Activated CD4-positive, alpha-beta memory T cell treated with anti-CD3 and anti-CD28 coated beads, Interleukin-2, amount 10 ng/mL, durations not matched to agents 7 days and 5 days (primary cell): ENCODE measurements at regions of chr21 and their contacts with region 1.

Region 1: DNA sequence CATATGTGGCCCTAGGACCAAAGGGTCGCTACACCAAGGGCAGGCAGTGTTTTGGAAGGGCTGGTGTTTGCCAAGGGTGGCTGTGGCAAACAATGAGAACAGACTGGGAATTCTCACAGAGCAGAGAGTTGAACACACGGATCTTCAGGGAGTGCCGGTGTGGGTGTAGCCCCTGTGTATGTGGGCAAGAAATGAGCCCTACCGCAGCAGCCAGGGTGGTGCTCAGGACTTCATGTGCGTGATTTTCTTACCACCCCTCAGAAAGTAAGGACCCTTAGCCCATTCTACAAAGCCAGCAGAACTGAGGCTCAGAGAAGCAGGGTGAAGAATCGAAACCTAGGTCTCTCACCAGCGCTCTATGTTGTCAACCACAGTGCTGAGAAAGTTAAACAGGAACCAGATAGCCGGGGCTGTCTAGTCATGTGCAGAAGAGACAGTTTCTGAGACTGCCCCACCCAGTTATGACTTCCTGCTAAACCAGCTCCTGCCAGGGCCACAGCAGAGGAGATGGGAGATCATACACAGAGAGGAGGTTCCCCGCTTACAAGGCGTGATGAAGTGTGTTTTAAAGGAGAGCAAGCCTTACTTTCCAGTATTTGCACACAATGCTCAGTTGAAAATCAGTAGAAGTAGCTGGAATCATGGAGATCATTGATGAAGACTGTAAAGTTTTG is 21.9 kb upstream of the MORC3 start:
- DNase-seq: peak; percentile 83
- H3K4me3 Mint-ChIP-seq: peak overlapping the region; percentile 76
- H3K27ac Mint-ChIP-seq: peak overlapping the region; percentile 93
- H3K4me1 Mint-ChIP-seq: peaks cover 50% of the 10 kb centered on the region
- H3K27me3 Mint-ChIP-seq: no peaks in the 10 kb centered on the region

Region 2: GRCh38 chr21:36260030-36260787 is 37.8 kb before region 1 on chr21:
- CTCF ChIA-PET with region 1: interaction called, 19 read pairs
- POLR2A ChIA-PET with region 1: interaction called, 3 read pairs
- DNase-seq: peak; percentile 46
- H3K4me3 Mint-ChIP-seq: peak overlapping the region; percentile 60
- H3K27ac Mint-ChIP-seq: peak overlapping the region; percentile 81
- H3K4me1 Mint-ChIP-seq: peaks cover 19% of the 10 kb centered on the region
- H3K27me3 Mint-ChIP-seq: no peaks in the 10 kb centered on the region

Region 3: DNA sequence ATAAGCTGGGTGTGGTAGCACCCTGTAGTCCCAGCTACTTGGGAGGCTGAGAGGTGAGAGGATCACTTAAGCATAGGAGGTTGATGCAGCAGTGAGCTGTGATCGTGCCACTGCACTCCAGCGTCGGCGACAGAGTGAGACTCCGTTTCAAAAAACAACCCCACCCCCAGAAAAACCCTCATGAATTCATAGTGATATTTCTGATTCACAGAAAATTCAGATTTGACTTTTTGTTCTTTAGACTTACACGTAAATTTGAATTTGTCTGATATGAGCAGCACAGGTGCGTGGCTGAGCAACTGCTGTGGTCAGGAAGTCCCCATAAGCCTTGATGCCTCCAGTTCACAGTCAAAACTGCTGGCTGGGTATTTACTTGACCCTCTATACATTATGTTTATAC is 12.0 kb after region 1 on chr21:
- CTCF ChIA-PET with region 1: interaction called, 5 read pairs
- POLR2A ChIA-PET with region 1: interaction called, 20 read pairs
- DNase-seq: peak; percentile 26
- H3K4me3 Mint-ChIP-seq: peak overlapping the region; percentile 27
- H3K27ac Mint-ChIP-seq: peak overlapping the region; percentile 58
- H3K4me1 Mint-ChIP-seq: peaks cover 8% of the 10 kb centered on the region
- H3K27me3 Mint-ChIP-seq: no peaks in the 10 kb centered on the region

Region 4: DNA sequence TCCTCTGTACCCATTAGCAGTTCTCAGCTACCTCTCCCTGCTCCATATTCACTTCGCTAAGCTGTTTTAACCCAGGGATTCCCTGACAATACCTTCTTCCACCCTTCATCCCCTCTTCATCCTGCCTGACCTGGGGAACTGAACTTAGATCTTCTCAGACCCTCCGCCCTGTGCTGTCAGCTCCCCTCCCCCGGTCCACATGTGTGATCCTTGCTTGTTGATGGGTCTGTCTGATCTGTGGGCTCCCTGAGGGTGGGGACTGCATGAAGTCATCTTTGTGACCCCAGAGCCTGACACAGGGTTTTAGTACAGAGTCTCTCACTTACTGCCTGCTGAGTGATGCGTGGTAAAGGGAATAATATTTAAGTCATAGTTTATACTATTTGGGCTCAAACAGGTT is 98.9 kb after region 1 on chr21:
- CTCF ChIA-PET with region 1: no interaction called
- POLR2A ChIA-PET with region 1: no interaction called
- DNase-seq: no peak
- H3K4me3 Mint-ChIP-seq: no peak overlapping the region
- H3K27ac Mint-ChIP-seq: no peak overlapping the region
- H3K4me1 Mint-ChIP-seq: no peaks in the 10 kb centered on the region
- H3K27me3 Mint-ChIP-seq: no peaks in the 10 kb centered on the region

Region 5: DNA sequence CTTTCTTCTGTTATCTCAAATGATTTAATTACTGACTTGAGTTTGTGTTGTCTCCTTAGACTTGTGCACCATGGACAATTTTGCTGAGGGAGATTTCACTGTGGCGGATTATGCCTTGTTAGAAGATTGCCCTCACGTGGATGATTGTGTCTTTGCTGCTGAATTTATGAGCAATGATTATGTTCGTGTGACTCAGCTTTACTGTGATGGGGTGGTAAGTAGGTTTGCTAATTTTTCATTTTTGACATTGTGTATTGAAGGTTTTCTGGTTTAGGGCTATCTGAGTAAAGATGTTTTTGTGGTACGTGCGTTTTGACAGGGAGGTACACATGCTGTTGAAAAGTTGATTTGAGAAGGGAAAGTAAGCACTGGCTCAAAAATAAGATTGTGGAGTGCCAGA is 789.1 kb after region 1 on chr21:
- CTCF ChIA-PET with region 1: no interaction called
- POLR2A ChIA-PET with region 1: no interaction called
- DNase-seq: no peak
- H3K4me3 Mint-ChIP-seq: no peak overlapping the region
- H3K27ac Mint-ChIP-seq: no peak overlapping the region
- H3K4me1 Mint-ChIP-seq: peaks cover 5% of the 10 kb centered on the region
- H3K27me3 Mint-ChIP-seq: no peaks in the 10 kb centered on the region